ENCODE measurements at regions of chr3 and their contacts with region 1.

Region 1: DNA sequence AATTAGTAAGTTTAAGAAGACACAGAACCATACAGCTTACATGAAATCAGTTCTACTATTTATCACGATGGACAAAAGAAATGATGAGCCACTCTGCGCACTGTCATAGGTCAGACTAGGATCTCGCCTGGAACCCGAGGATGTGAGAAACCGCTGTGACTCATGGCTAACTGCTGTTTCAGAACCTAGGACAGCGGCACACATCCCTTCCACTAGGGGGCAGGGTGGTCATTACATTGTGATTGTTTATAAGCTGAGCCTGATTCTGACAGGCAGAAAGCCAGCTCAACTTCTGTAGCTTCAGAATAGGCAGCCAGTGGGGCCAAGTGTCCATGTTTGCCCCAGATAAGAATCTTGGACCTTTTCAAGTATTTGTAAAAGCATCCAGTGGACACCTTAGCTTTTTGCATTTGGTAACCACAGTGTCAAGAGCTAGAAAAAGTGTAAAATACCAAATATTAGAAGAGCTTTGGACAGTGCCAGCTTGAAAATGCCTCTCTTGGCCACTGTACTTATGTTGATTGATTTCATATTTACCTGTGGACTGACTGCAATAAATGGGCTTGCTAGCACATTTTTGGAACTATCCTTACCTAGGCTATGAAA is 115.8 kb downstream of the KBTBD8 start:
- H3K4me3 Mint-ChIP-seq: no peak overlapping the region
- H3K27ac Mint-ChIP-seq: no peak overlapping the region
- H3K4me1 Mint-ChIP-seq: no peaks in the 10 kb centered on the region
- H3K27me3 Mint-ChIP-seq: peaks cover 2% of the 10 kb centered on the region

Region 2: GRCh38 chr3:66971891-66972551 is 141.9 kb before region 1 on chr3:
- intact Hi-C with region 1: loop called (anchors 10 kb)
- H3K4me3 Mint-ChIP-seq: peak overlapping the region; percentile 61
- H3K27ac Mint-ChIP-seq: no peak overlapping the region
- H3K4me1 Mint-ChIP-seq: peaks cover 6% of the 10 kb centered on the region
- H3K27me3 Mint-ChIP-seq: peaks cover 6% of the 10 kb centered on the region

Region 3: DNA sequence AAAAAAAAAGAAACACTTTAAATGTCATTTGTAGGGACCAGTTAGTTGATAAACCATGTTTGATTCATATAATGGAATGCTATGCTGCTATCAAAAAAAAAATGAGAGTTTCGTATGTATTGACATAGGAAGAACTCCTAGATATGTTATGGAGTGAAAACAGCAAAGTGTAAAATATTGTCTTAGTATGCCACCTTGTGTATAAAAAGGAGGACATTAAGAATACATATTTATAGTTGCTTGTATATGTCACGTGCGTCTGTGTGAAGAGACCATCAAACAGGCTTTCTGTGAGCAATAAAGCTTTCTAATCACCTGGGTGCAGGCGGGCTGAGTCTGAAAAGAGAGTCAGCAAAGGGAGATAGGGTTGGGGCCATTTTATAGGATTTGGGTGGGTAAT is 76.3 kb before region 1 on chr3:
- intact Hi-C with region 1: no loop called
- H3K4me3 Mint-ChIP-seq: no peak overlapping the region
- H3K27ac Mint-ChIP-seq: no peak overlapping the region
- H3K4me1 Mint-ChIP-seq: no peaks in the 10 kb centered on the region
- H3K27me3 Mint-ChIP-seq: no peaks in the 10 kb centered on the region

Region 4: GRCh38 chr3:67357610-67358458 is 243.9 kb after region 1 on chr3:
- intact Hi-C with region 1: loop called (anchors 1 kb)
- H3K4me3 Mint-ChIP-seq: no peak overlapping the region
- H3K27ac Mint-ChIP-seq: no peak overlapping the region
- H3K4me1 Mint-ChIP-seq: no peaks in the 10 kb centered on the region
- H3K27me3 Mint-ChIP-seq: no peaks in the 10 kb centered on the region

Region 5: GRCh38 chr3:67654099-67654843 is 540.4 kb after region 1 on chr3 and contains the start of gene SUCLG2:
- intact Hi-C with region 1: loop called (anchors 10 kb)
- H3K4me3 Mint-ChIP-seq: peak within 1 kb of the TSS; percentile 73
- H3K27ac Mint-ChIP-seq: peak within 1 kb of the TSS; percentile 73
- H3K4me1 Mint-ChIP-seq: peaks cover 34% of the 10 kb centered on the region
- H3K27me3 Mint-ChIP-seq: peaks cover 35% of the 10 kb centered on the region

Region 6: GRCh38 chr3:67790043-67790442 is 676.1 kb after region 1 on chr3:
- intact Hi-C with region 1: loop called (anchors 1 kb)
- H3K4me3 Mint-ChIP-seq: no peak overlapping the region
- H3K27ac Mint-ChIP-seq: no peak overlapping the region
- H3K4me1 Mint-ChIP-seq: no peaks in the 10 kb centered on the region
- H3K27me3 Mint-ChIP-seq: no peaks in the 10 kb centered on the region

Region 7: GRCh38 chr3:68876112-68876713 is 1762.3 kb after region 1 on chr3:
- intact Hi-C with region 1: loop called (anchors 5 kb)
- H3K4me3 Mint-ChIP-seq: no peak overlapping the region
- H3K27ac Mint-ChIP-seq: no peak overlapping the region
- H3K4me1 Mint-ChIP-seq: peaks cover 8% of the 10 kb centered on the region
- H3K27me3 Mint-ChIP-seq: peaks cover 7% of the 10 kb centered on the region

Region 8: DNA sequence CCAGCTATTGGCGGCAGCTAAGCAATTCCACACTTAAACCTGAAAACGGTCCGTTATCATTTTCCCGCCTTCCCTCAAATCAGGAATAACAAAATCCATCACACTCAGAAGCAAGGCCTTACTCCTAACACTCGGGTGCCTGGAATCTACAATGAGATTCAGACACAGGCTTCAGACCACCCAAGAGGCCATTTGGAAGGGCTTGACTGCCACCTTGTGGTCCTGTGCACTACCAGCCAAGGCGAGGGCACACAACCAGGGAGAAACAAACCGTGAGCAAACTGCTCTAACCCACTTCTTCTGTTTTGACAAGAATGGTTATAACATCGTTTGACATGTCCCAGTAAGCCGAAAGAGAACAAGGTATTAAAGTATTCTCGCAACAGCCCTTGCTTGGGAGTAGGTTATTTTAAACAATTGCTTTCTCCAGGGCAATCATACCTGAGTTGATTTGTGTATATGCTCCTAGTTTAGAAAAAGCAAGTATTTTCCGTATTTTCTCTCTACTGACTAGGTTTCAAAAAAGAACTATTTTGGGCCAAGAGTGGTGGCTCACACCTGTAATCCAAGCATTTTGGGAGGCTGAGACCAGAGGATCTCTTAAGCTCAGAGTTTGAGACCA is 1858.6 kb after region 1 on chr3:
- intact Hi-C with region 1: loop called (anchors 10 kb)
- H3K4me3 Mint-ChIP-seq: no peak overlapping the region
- H3K27ac Mint-ChIP-seq: no peak overlapping the region
- H3K4me1 Mint-ChIP-seq: peaks cover 16% of the 10 kb centered on the region
- H3K27me3 Mint-ChIP-seq: peaks cover 13% of the 10 kb centered on the region